ENCODE measurements at regions of chr17 and their contacts with region 1.

Region 1: GRCh38 chr17:8941520-8941919 is 24.0 kb downstream of the PIK3R5 start:
- DNase-seq: peak in 8 of 9 experiments; percentile 43 to 87 (median 72)
- ATAC-seq: peak; percentile 41
- H3K4me3 ChIP-seq: peak overlapping the region; percentile 32 to 43
- H3K4me3 Mint-ChIP-seq: peak overlapping the region; percentile 63
- H3K27ac ChIP-seq: peak overlapping the region; percentile 64 to 76
- H3K27ac Mint-ChIP-seq: peak overlapping the region; percentile 97
- H3K4me1 ChIP-seq: peaks cover 79% of the 10 kb centered on the region
- H3K4me1 Mint-ChIP-seq: peaks cover 88% of the 10 kb centered on the region
- H3K27me3 ChIP-seq: no peaks in the 10 kb centered on the region
- H3K27me3 Mint-ChIP-seq: no peaks in the 10 kb centered on the region
- CTCF ChIP-seq: no peak

Region 2: DNA sequence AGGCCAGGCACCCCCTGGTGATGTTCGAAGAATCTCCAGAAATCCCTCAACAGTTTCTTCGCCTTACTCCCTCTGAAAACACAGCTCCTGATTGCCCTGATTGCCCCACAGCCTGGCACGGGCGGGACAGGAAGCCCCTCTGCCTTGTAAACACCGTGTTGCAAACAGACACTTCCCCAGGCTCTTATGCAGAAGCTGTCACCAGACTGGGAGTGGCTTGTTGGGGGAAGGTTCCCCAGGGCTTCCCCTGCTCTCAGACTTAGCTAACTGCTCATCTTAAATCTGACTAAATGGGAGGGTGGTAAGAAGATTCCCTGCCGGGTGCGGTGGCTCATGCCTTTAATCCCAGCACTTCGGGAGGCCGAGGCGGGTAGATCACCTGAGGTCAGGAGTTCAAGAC is 12.8 kb after region 1 on chr17:
- CTCF ChIA-PET with region 1: interaction called, 25 read pairs
- POLR2A ChIA-PET with region 1: interaction called, 61 read pairs
- intact Hi-C with region 1: loop called (anchors 1 kb)
- DNase-seq: peak; percentile 67 to 96 (median 83)
- ATAC-seq: peak; percentile 92
- H3K4me3 ChIP-seq: peak overlapping the region in 1 of 2 experiments; percentile 4
- H3K4me3 Mint-ChIP-seq: peak overlapping the region; percentile 83
- H3K27ac ChIP-seq: peak overlapping the region; percentile 40 to 85
- H3K27ac Mint-ChIP-seq: peak overlapping the region; percentile 99
- H3K4me1 ChIP-seq: peaks cover 89% of the 10 kb centered on the region
- H3K4me1 Mint-ChIP-seq: peaks cover 97% of the 10 kb centered on the region
- H3K27me3 ChIP-seq: no peaks in the 10 kb centered on the region
- H3K27me3 Mint-ChIP-seq: no peaks in the 10 kb centered on the region
- CTCF ChIP-seq: no peak

Measured in CD8-positive, alpha-beta T cell (primary cell).